Left cardiac atrium (tissue), 4 donors: ENCODE measurements at regions of chr11 and their contacts with region 1.

Region 1: GRCh38 chr11:132312701-132313111 is 942.3 kb downstream of the NTM start:
- DNase-seq: no peak
- ATAC-seq: peak; percentile 21 to 30

Region 2: DNA sequence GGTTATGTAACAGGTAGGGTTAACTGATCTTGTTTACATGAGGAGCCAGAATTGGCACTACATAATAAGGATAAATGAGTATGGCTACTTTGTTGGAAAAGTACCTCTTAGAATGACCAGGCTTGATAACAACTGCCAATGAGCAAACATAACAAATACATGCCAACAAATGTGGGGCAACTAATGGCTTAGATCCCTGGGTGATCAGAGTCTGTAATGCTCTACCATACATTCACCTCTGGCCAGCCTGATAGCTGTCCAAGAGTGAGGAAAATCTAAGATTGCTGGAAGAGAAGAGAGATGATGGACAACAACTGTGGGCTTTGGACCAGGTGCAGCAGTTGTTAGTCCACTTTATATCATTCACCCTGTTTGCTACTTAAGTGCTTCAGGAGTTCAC is 82.7 kb after region 1 on chr11:
- intact Hi-C with region 1: loop called in 1 of 2 experiments (anchors 10 kb)
- DNase-seq: no peak
- ATAC-seq: no peak